CD4-positive, alpha-beta T cell (primary cell): ENCODE measurements at regions of chr1 and their contacts with region 1.

Region 1: DNA sequence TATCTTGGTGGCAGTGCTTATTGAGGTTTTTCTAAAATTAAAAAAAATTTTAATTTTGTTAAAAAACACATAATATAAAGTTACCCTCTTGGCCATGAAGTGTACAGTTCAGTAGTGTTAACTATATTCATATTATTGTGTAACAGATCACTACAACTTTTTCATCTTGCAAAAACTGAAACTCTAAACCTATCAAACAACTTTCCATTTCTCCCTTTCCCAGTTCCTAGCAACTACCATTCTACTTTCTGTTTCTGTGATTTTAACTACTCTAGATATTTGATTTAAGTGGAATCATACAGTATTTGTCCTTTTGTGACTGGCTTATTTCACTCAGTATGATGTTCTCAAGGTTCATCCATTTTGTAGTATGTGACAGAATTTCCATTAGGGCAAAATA is 55.5 kb downstream of the SLAMF6 start:
- DNase-seq: no peak
- ATAC-seq: no peak
- H3K4me3 ChIP-seq: no peak overlapping the region
- H3K4me3 Mint-ChIP-seq: no peak overlapping the region
- H3K27ac ChIP-seq: no peak overlapping the region
- H3K27ac Mint-ChIP-seq: no peak overlapping the region
- H3K4me1 ChIP-seq: peaks cover 7% of the 10 kb centered on the region
- H3K4me1 Mint-ChIP-seq: peaks cover 36% of the 10 kb centered on the region
- H3K27me3 ChIP-seq: no peaks in the 10 kb centered on the region
- H3K27me3 Mint-ChIP-seq: no peaks in the 10 kb centered on the region
- CTCF ChIP-seq: no peak

Region 2: DNA sequence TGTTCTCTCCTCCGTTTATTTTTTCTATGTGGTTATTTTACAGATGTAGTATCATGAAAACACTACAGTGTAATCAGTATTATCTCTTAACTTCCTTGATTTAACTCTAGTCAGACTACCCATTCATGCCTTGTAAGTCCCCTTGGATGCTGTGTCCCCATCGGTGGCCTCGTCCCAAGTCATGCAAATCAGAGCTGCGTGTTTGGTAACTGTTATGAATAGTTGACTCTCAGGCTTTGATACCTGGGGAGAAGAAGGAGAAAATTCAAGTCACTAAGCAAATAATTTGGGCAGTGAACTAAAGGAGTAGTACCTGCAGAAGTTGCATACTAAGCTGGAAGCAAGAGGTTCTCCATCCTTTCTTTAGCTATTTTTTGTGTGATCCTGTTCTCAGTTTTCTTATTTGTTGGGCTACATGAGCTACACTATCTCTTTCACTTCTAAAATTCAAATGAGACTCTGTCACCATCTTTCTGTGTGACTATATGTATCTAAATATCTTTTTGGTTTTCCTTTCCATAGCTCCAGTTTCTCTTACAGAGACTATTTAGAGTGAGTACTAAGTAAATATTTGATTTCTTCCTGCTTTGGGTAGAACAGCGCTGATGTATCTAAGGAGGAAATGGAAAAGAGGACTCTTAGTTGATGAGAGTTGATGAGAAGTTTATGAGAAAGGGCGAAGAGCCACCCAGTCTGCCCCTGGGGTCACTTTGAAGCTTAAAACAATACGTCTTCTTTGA is 16.3 kb before region 1 on chr1:
- CTCF ChIA-PET with region 1: interaction called, 3 read pairs
- POLR2A ChIA-PET with region 1: interaction called, 10 read pairs
- intact Hi-C with region 1: no loop called
- DNase-seq: no peak
- ATAC-seq: peak; percentile 29
- H3K4me3 ChIP-seq: peak overlapping the region; percentile 0
- H3K4me3 Mint-ChIP-seq: peak overlapping the region; percentile 39
- H3K27ac ChIP-seq: peak overlapping the region in 1 of 2 donors; percentile 20
- H3K27ac Mint-ChIP-seq: peak overlapping the region; percentile 67
- H3K4me1 ChIP-seq: peaks cover 35% of the 10 kb centered on the region
- H3K4me1 Mint-ChIP-seq: peaks cover 73% of the 10 kb centered on the region
- H3K27me3 ChIP-seq: no peaks in the 10 kb centered on the region
- H3K27me3 Mint-ChIP-seq: no peaks in the 10 kb centered on the region
- CTCF ChIP-seq: no peak